OCI-LY7 (cell line): ENCODE measurements at regions of chr3 and their contacts with region 1.

Region 1: GRCh38 chr3:188584162-188584529 is 430.2 kb downstream of the LPP start:
- DNase-seq: peak; percentile 14
- H3K4me3 ChIP-seq: peak overlapping the region; percentile 9
- H3K27ac ChIP-seq: no peak overlapping the region
- H3K4me1 ChIP-seq: peaks cover 81% of the 10 kb centered on the region
- CTCF ChIP-seq: no peak

Region 2: DNA sequence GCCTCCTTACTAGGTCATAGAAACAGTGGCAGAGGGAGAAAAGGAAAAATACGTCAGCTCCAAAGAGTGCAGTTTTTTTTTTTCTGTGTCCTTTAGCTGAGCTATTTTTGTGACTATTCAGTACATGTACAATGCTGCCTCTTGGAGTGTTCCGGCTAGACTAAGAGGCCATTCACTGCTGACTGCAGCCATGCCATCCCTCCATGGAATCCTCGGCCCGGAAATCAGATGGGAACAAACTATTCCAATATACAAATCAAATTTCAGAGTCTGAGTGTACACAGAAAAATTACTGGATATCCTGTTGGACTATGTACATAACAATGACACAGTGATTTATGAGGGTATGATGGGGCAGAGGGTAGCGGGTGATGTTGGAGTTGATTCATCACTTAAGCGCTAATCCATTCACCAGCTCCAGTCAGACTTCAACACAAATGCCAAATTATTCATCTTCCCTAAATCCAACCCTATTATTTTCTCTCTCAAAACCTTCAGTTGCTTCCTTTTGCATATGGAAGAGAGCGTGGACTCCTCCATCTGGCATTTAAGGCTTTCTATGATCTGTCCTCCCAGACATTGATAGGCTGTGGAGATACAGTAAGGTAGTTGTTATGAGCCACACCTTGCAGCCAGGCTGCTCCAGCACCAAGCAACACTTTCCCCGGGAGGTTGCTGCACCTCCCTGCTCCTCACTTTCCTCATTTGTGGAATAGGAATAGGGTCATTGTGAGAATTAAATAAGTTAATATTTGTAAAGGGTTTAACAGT is 321.0 kb before region 1 on chr3:
- CTCF ChIA-PET with region 1: no interaction called
- POLR2A ChIA-PET with region 1: no interaction called
- intact Hi-C with region 1: no loop called
- DNase-seq: no peak
- H3K4me3 ChIP-seq: no peak overlapping the region
- H3K27ac ChIP-seq: no peak overlapping the region
- H3K4me1 ChIP-seq: peaks cover 2% of the 10 kb centered on the region
- CTCF ChIP-seq: no peak

Region 3: GRCh38 chr3:188301147-188301546 is 283.0 kb before region 1 on chr3:
- CTCF ChIA-PET with region 1: no interaction called
- POLR2A ChIA-PET with region 1: no interaction called
- intact Hi-C with region 1: no loop called
- DNase-seq: no peak
- H3K4me3 ChIP-seq: no peak overlapping the region
- H3K27ac ChIP-seq: no peak overlapping the region
- H3K4me1 ChIP-seq: peaks cover 47% of the 10 kb centered on the region
- CTCF ChIP-seq: no peak

Region 4: DNA sequence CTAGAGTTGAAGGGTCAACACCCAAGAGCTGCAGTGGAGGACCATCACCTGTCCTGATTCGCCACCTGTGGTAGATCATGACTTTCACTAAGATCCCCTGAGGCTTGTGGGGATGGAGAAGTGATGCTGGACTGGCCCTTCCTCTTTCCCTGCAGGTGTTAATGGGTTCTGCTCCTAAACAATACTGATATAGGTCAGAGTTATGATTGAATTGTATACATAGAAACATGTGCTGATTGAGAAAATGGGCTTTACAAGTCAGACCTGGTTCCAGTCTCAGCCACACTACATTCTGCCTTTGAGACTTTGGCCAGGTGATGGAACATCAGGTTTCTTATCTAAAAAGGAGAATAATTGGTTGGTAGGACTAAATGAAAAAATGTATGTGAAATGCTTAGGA is 168.7 kb after region 1 on chr3:
- CTCF ChIA-PET with region 1: no interaction called
- POLR2A ChIA-PET with region 1: interaction called, 3 read pairs
- intact Hi-C with region 1: loop called (anchors 5 kb)
- DNase-seq: peak; percentile 76
- H3K4me3 ChIP-seq: peak overlapping the region; percentile 54
- H3K27ac ChIP-seq: peak overlapping the region; percentile 89
- H3K4me1 ChIP-seq: peaks cover 68% of the 10 kb centered on the region
- CTCF ChIP-seq: no peak